Activated B cell treated with CpG ODN at 0.5 μM for 24 hours (primary cell): ENCODE measurements at regions of chr2 and their contacts with region 1.

Region 1: DNA sequence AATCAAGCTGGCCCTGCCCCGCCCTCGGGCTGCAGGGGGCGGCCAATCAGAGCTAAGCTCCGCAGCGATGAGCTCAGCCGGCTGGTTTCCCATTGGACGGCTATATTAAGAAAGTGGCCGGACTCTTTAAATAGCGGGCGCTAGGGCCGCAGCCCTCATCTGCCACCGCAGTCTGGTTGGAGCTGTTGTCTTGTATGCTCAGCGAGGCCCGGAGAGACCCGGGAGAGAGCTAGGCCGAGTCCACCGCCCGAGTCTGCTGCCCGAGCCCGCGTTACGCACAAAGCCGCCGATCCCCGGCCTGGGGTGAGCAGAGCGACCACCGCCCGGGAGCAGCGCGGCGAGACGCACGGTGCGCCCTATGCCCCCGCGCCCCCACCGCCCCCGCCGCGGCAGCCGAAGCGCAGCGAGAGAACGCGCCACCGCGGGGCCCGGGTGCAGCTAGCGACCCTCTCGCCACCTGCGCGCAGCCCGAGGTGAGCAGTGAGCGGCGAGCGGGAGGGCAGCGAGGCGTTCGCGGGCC is at the start of gene RHOB:
- DNase-seq: peak; percentile 87
- ATAC-seq: peak; percentile 96
- H3K4me3 Mint-ChIP-seq: peak within 1 kb of the TSS; percentile 88
- H3K27ac Mint-ChIP-seq: peak within 1 kb of the TSS; percentile 85
- H3K4me1 Mint-ChIP-seq: peaks cover 16% of the 10 kb centered on the region
- H3K27me3 Mint-ChIP-seq: peaks cover 2% of the 10 kb centered on the region
- CTCF ChIP-seq: no peak
- total RNA-seq, gene RHOB: 11.0 and 12.9 TPM in 2 replicates

Region 2: GRCh38 chr2:19347619-19348562 is 1099.1 kb before region 1 on chr2:
- CTCF ChIA-PET with region 1: no interaction called
- POLR2A ChIA-PET with region 1: interaction called, 12 read pairs
- intact Hi-C with region 1: no loop called
- DNase-seq: peak; percentile 100
- ATAC-seq: peak; percentile 89
- H3K4me3 Mint-ChIP-seq: peak overlapping the region; percentile 98
- H3K27ac Mint-ChIP-seq: peak overlapping the region; percentile 98
- H3K4me1 Mint-ChIP-seq: peaks cover 35% of the 10 kb centered on the region
- H3K27me3 Mint-ChIP-seq: peaks cover 28% of the 10 kb centered on the region
- CTCF ChIP-seq: no peak

Region 3: GRCh38 chr2:20051532-20052228 is 395.3 kb before region 1 on chr2 and contains the start of gene LAPTM4A:
- CTCF ChIA-PET with region 1: no interaction called
- POLR2A ChIA-PET with region 1: interaction called, 7 read pairs
- intact Hi-C with region 1: loop called (anchors 1 kb)
- DNase-seq: peak; percentile 91
- ATAC-seq: peak; percentile 90
- H3K4me3 Mint-ChIP-seq: no peak within 1 kb of the TSS
- H3K27ac Mint-ChIP-seq: no peak within 1 kb of the TSS
- H3K4me1 Mint-ChIP-seq: peaks cover 29% of the 10 kb centered on the region
- H3K27me3 Mint-ChIP-seq: peaks cover 14% of the 10 kb centered on the region
- CTCF ChIP-seq: no peak
- total RNA-seq, gene LAPTM4A: 47.2 and 48.8 TPM in 2 replicates

Region 4: GRCh38 chr2:20424300-20425290 is 22.4 kb before region 1 on chr2:
- CTCF ChIA-PET with region 1: interaction called, 4 read pairs
- POLR2A ChIA-PET with region 1: interaction called, 17 read pairs
- intact Hi-C with region 1: loop called (anchors 2 kb)
- DNase-seq: no peak
- ATAC-seq: peak; percentile 53
- H3K4me3 Mint-ChIP-seq: peak overlapping the region; percentile 72
- H3K27ac Mint-ChIP-seq: peak overlapping the region; percentile 83
- H3K4me1 Mint-ChIP-seq: peaks cover 58% of the 10 kb centered on the region
- H3K27me3 Mint-ChIP-seq: no peaks in the 10 kb centered on the region
- CTCF ChIP-seq: no peak

Region 5: DNA sequence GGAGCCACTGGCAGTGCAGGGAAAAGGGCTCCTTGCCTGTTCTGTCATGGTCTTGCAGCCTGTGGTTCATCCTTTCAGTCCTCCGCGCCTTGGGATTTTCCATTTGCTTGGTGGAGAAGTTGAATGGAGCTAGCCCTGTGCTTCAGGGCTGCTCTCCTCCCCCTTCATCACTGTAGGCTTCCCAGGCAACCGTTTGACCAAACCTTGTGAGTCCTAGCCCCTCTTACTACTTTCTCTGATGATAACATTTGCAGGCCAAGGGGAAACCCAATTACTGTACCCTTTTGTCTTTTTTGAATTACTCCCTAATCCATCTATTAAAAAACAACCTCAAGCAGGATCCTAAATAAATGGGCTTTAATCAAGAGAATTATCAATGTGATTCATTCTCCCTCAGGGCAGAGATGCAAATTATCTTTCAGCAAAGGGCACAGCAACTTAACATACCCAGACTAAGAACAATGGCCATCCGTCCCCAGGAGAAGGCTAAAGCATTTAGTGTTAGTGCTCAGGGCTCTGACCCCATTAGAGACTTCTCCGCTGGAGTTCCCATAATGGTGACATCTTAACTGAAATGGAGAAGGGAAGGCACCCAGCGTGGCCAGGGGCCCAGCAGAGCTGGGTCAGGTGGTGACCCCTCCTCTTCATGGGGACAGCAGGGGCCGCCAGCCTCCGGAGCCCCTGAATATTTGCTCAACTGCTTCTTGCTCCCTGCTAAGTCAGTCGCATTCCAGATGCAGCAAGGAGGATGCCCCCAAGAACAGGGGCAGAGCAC is 40.6 kb after region 1 on chr2:
- CTCF ChIA-PET with region 1: no interaction called
- POLR2A ChIA-PET with region 1: no interaction called
- intact Hi-C with region 1: no loop called
- DNase-seq: no peak
- ATAC-seq: no peak
- H3K4me3 Mint-ChIP-seq: no peak overlapping the region
- H3K27ac Mint-ChIP-seq: no peak overlapping the region
- H3K4me1 Mint-ChIP-seq: no peaks in the 10 kb centered on the region
- H3K27me3 Mint-ChIP-seq: peaks cover 2% of the 10 kb centered on the region
- CTCF ChIP-seq: no peak

Region 6: DNA sequence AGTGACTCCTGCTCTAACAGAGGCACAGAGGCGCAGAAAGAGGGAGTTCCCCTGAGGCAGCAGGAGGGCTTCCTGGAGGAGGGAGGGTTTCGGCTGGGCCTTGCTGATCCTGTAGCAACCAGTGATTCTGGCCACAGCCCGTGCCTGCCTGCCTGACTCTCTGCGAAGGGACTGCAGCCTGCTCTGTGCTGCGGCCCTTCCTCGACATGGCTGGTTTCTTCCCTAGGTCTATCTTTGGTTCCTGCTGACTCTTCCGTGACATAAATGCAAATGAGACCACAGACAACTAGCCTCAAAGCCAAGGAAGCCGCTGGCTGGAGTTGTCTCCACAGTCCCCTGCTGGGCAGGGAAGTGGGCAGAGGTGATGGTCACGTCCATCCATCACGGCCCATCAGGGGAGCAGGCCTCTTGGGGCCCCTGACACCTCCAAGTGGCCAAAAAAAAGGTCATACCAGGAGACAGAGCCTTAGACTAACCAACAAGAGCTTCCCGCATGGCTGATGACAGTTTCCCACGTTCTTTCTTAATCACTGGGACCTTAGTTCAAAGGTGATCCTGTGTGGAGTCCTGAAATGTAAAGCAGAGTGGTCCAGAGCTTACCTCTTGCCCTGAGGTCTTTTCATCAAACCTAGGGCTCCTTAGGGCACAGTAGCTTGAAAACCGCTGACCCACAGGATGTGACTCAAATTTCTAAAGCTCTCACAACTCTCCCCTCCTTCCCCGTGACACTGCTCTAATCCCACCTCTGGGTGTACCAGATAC is 148.6 kb after region 1 on chr2:
- CTCF ChIA-PET with region 1: interaction called, 5 read pairs
- POLR2A ChIA-PET with region 1: interaction called, 14 read pairs
- intact Hi-C with region 1: loop called (anchors 1 kb)
- DNase-seq: peak; percentile 45
- ATAC-seq: peak; percentile 83
- H3K4me3 Mint-ChIP-seq: peak overlapping the region; percentile 72
- H3K27ac Mint-ChIP-seq: peak overlapping the region; percentile 82
- H3K4me1 Mint-ChIP-seq: peaks cover 38% of the 10 kb centered on the region
- H3K27me3 Mint-ChIP-seq: peaks cover 21% of the 10 kb centered on the region
- CTCF ChIP-seq: no peak

Region 7: GRCh38 chr2:20650880-20651730 is 204.1 kb after region 1 on chr2 and contains the start of gene HS1BP3:
- CTCF ChIA-PET with region 1: interaction called, 20 read pairs
- POLR2A ChIA-PET with region 1: interaction called, 86 read pairs
- intact Hi-C with region 1: loop called (anchors 1 kb)
- DNase-seq: peak; percentile 97
- ATAC-seq: peak; percentile 95
- H3K4me3 Mint-ChIP-seq: peak within 1 kb of the TSS; percentile 87
- H3K27ac Mint-ChIP-seq: peak within 1 kb of the TSS; percentile 94
- H3K4me1 Mint-ChIP-seq: peaks cover 41% of the 10 kb centered on the region
- H3K27me3 Mint-ChIP-seq: peaks cover 3% of the 10 kb centered on the region
- CTCF ChIP-seq: no peak
- total RNA-seq, gene HS1BP3: 13.0 and 13.1 TPM in 2 replicates

Region 8: GRCh38 chr2:20962939-20963557 is 516.1 kb after region 1 on chr2:
- CTCF ChIA-PET with region 1: no interaction called
- POLR2A ChIA-PET with region 1: no interaction called
- intact Hi-C with region 1: loop called (anchors 1 kb)
- DNase-seq: peak; percentile 49
- ATAC-seq: peak; percentile 73
- H3K4me3 Mint-ChIP-seq: no peak overlapping the region
- H3K27ac Mint-ChIP-seq: no peak overlapping the region
- H3K4me1 Mint-ChIP-seq: no peaks in the 10 kb centered on the region
- H3K27me3 Mint-ChIP-seq: peaks cover 19% of the 10 kb centered on the region
- CTCF ChIP-seq: peak; percentile 82